ENCODE measurements at regions of chr9 and their contacts with region 1.

Region 1: GRCh38 chr9:89428901-89429890 is 68.7 kb downstream of the SEMA4D start:
- DNase-seq: peak; percentile 63
- H3K4me3 Mint-ChIP-seq: no peak overlapping the region
- H3K27ac Mint-ChIP-seq: peak overlapping the region; percentile 97
- H3K4me1 Mint-ChIP-seq: peaks cover 89% of the 10 kb centered on the region
- H3K27me3 Mint-ChIP-seq: no peaks in the 10 kb centered on the region

Region 2: GRCh38 chr9:88680505-88681160 is 748.6 kb before region 1 on chr9:
- CTCF ChIA-PET with region 1: no interaction called
- POLR2A ChIA-PET with region 1: no interaction called
- DNase-seq: no peak
- H3K4me3 Mint-ChIP-seq: no peak overlapping the region
- H3K27ac Mint-ChIP-seq: no peak overlapping the region
- H3K4me1 Mint-ChIP-seq: no peaks in the 10 kb centered on the region
- H3K27me3 Mint-ChIP-seq: no peaks in the 10 kb centered on the region

Region 3: DNA sequence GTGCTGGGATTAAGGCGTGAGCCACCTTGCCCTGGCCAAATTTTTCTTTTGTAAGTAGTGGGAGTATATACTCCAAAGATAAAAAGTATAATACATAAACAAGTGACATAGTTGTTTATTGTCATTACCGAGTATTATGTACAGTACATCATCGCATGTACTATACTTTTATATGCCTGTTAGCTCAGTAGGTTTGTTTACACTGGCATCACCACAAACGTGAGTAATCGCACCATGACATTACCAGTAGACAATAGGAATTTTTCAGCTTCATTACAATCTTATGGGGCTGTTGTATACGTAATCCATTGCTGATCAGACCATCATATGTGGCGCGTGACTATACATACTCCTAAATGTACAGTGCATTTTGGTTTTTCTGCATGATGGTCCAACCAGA is 101.1 kb before region 1 on chr9:
- CTCF ChIA-PET with region 1: no interaction called
- POLR2A ChIA-PET with region 1: no interaction called
- DNase-seq: no peak
- H3K4me3 Mint-ChIP-seq: no peak overlapping the region
- H3K27ac Mint-ChIP-seq: no peak overlapping the region
- H3K4me1 Mint-ChIP-seq: peaks cover 10% of the 10 kb centered on the region
- H3K27me3 Mint-ChIP-seq: no peaks in the 10 kb centered on the region

Region 4: GRCh38 chr9:89368978-89369377 is 60.2 kb before region 1 on chr9:
- CTCF ChIA-PET with region 1: no interaction called
- POLR2A ChIA-PET with region 1: no interaction called
- DNase-seq: no peak
- H3K4me3 Mint-ChIP-seq: no peak overlapping the region
- H3K27ac Mint-ChIP-seq: peak overlapping the region; percentile 47
- H3K4me1 Mint-ChIP-seq: peaks cover 18% of the 10 kb centered on the region
- H3K27me3 Mint-ChIP-seq: no peaks in the 10 kb centered on the region

Region 5: GRCh38 chr9:89391585-89391984 is 37.6 kb before region 1 on chr9:
- CTCF ChIA-PET with region 1: no interaction called
- POLR2A ChIA-PET with region 1: no interaction called
- DNase-seq: no peak
- H3K4me3 Mint-ChIP-seq: no peak overlapping the region
- H3K27ac Mint-ChIP-seq: no peak overlapping the region
- H3K4me1 Mint-ChIP-seq: peaks cover 9% of the 10 kb centered on the region
- H3K27me3 Mint-ChIP-seq: no peaks in the 10 kb centered on the region

Region 6: DNA sequence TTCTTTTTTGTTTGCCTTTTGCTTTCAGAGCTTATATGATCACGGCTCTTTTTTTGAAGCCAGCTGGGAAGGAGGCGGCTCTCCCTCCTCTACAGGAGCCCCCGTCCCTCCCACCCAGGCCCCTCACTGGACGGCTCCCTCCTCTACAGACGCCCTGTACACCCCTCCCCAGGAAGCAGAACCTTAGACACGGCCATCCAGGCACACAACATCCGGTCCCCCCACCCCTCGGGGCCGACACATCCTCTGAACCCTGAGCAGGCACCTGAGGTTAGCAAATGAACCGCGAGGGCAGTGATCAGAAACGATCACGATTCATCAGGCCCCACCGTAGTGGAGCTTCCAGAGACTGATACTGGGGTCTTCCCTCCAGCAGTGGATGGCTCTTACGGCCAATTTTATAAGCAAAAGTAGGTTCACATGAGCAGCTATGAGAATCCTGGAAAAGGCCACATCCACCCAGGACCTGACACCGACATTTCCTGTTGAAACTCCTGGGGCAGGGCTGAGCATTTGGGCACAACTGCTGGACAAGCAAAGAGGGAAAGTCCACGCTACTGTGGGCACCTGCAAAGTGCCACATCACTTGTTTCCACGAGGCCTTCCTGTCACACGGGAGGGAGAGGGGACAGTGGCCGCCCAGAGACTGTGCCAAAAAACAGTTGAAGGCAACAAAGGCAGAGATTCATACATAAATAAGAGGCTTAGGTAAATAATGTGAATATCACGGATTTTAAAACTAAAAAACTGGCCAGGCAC is 10.1 kb before region 1 on chr9:
- CTCF ChIA-PET with region 1: interaction called, 18 read pairs
- POLR2A ChIA-PET with region 1: interaction called, 63 read pairs
- DNase-seq: peak; percentile 87
- H3K4me3 Mint-ChIP-seq: peak overlapping the region; percentile 78
- H3K27ac Mint-ChIP-seq: peak overlapping the region; percentile 97
- H3K4me1 Mint-ChIP-seq: peaks cover 99% of the 10 kb centered on the region
- H3K27me3 Mint-ChIP-seq: no peaks in the 10 kb centered on the region

Region 7: GRCh38 chr9:89455356-89455824 is 26.2 kb after region 1 on chr9:
- CTCF ChIA-PET with region 1: interaction called, 5 read pairs
- POLR2A ChIA-PET with region 1: interaction called, 12 read pairs
- DNase-seq: peak; percentile 62
- H3K4me3 Mint-ChIP-seq: peak overlapping the region; percentile 52
- H3K27ac Mint-ChIP-seq: peak overlapping the region; percentile 76
- H3K4me1 Mint-ChIP-seq: peaks cover 90% of the 10 kb centered on the region
- H3K27me3 Mint-ChIP-seq: no peaks in the 10 kb centered on the region

Region 8: GRCh38 chr9:89497978-89498851 is 69.0 kb after region 1 on chr9 and contains the start of gene SEMA4D:
- CTCF ChIA-PET with region 1: interaction called, 11 read pairs
- POLR2A ChIA-PET with region 1: interaction called, 10 read pairs
- DNase-seq: peak; percentile 73
- H3K4me3 Mint-ChIP-seq: peak within 1 kb of the TSS; percentile 95
- H3K27ac Mint-ChIP-seq: peak within 1 kb of the TSS; percentile 96
- H3K4me1 Mint-ChIP-seq: peaks cover 83% of the 10 kb centered on the region
- H3K27me3 Mint-ChIP-seq: no peaks in the 10 kb centered on the region
- total RNA-seq, gene SEMA4D: 339 to 350 TPM